Activated CD4-positive, alpha-beta T cell treated with anti-CD3 and anti-CD28 coated beads, Interleukin-2, amount 10 ng/mL, durations not matched to agents 7 days and 5 days (primary cell): ENCODE measurements at regions of chr15 and their contacts with region 1.

Region 1: DNA sequence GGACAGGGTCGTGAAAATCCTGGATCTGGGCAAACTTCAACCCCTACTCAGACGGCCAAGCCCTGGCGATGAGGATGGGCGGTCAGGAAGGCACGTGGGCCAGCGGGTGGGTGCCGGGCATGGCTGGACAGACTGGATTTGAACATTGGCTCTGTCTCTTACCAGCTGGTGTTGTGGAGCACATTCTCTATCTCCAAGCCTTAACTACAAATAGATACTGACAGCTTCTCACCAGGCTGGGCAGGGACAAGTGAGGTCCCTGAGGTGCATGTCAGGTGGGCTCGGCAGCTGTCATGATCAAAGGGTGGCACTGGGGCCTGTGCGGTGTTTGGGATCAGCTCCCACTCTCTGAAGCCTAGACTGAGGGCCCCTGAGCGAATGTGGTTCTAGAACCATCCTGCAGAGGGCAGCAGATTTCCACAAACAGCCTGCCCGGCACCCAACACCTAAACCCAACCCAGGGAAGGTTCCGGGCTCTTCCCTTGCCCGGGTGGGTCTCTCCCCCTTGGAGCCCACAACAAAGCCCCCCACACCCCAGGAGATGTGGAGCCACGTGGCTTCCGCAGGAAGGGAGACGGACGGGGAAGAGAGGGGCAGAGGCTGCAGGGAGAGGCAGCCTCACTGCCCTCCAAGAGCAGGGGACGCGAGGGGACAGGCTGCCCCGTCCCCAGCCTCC is 58.4 kb downstream of the RGMA start:
- DNase-seq: peak; percentile 74
- H3K4me3 Mint-ChIP-seq: no peak overlapping the region
- H3K27ac Mint-ChIP-seq: peak overlapping the region; percentile 51
- H3K4me1 Mint-ChIP-seq: peaks cover 22% of the 10 kb centered on the region
- H3K27me3 Mint-ChIP-seq: no peaks in the 10 kb centered on the region

Region 2: GRCh38 chr15:93018580-93018979 is 12.0 kb before region 1 on chr15:
- CTCF ChIA-PET with region 1: interaction called, 11 read pairs
- POLR2A ChIA-PET with region 1: no interaction called
- DNase-seq: no peak
- H3K4me3 Mint-ChIP-seq: no peak overlapping the region
- H3K27ac Mint-ChIP-seq: peak overlapping the region; percentile 63
- H3K4me1 Mint-ChIP-seq: peaks cover 75% of the 10 kb centered on the region
- H3K27me3 Mint-ChIP-seq: no peaks in the 10 kb centered on the region